ENCODE measurements at regions of chr5 and their contacts with region 1.

Region 1: GRCh38 chr5:62578540-62578939 is at the start of gene LRRC70:
- DNase-seq: peak; percentile 35
- ATAC-seq: peak; percentile 85
- H3K4me3 ChIP-seq: no peak within 1 kb of the TSS
- H3K27ac ChIP-seq: no peak within 1 kb of the TSS
- H3K4me1 ChIP-seq: peaks cover 11% of the 10 kb centered on the region; the same call in 1 of the 2 replicates
- H3K27me3 ChIP-seq: no peaks in the 10 kb centered on the region
- CTCF ChIP-seq: no peak
- EP300 ChIP-seq: no peak
- POLR2A ChIP-seq: no peak
- RAD21 ChIP-seq: no peak
- polyA plus RNA-seq, gene LRRC70: 0.88 to 1.2 TPM

Region 2: GRCh38 chr5:62596096-62596495 is 17.6 kb after region 1 on chr5:
- CTCF ChIA-PET with region 1: interaction called, 4 read pairs
- POLR2A ChIA-PET with region 1: interaction called, 3 read pairs
- RAD21 ChIA-PET with region 1: no interaction called
- SMC1A ChIA-PET with region 1: interaction called, 11 read pairs
- in situ Hi-C with region 1: no loop called
- intact Hi-C with region 1: no loop called
- DNase-seq: no peak
- ATAC-seq: no peak
- H3K4me3 ChIP-seq: no peak overlapping the region
- H3K27ac ChIP-seq: no peak overlapping the region
- H3K4me1 ChIP-seq: no peaks in the 10 kb centered on the region; the same call in 1 of the 2 replicates
- H3K27me3 ChIP-seq: no peaks in the 10 kb centered on the region
- CTCF ChIP-seq: no peak
- EP300 ChIP-seq: no peak
- POLR2A ChIP-seq: no peak
- RAD21 ChIP-seq: no peak

Measured in GM12878 (cell line).